A673 (cell line): ENCODE measurements at regions of chr3 and their contacts with region 1.

Region 1: GRCh38 chr3:48273594-48274211 is 32.8 kb downstream of the ZNF589 start:
- DNase-seq: peak; percentile 47
- H3K4me3 ChIP-seq: no peak overlapping the region
- H3K27ac ChIP-seq: no peak overlapping the region
- H3K4me1 ChIP-seq: no peaks in the 10 kb centered on the region
- H3K27me3 ChIP-seq: no peaks in the 10 kb centered on the region
- CTCF ChIP-seq: peak; percentile 60

Region 2: DNA sequence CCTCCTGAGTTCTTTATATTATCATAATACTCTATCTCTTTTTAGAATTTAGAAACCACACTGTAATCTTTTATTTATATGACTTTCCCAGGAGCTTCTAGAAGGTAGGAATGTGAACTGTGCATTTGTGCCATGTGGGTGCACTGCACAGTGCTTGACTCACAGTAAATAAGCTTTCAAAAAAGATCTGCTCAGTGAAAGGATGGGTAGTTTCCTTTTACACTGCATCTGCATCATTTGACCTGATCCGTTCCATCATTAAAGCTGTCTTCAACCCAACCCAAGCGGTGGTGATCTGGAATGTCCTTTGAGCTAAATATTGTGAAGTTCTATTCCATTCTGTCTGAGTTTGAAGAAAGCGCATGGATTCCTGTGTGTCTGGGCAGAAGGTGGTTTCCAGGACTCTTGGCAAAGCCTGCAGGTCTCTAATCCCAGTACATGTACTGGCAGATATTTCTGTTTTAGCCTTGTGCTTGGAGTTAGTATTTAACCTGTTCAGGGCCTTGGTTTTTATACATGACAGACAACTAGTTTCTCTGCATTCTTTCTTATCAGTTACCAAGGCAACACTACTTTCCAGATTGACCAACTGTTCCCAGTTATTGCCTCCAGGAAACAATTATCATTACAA is 374.1 kb before region 1 on chr3:
- CTCF ChIA-PET with region 1: no interaction called
- POLR2A ChIA-PET with region 1: no interaction called
- intact Hi-C with region 1: no loop called
- DNase-seq: no peak
- H3K4me3 ChIP-seq: no peak overlapping the region
- H3K27ac ChIP-seq: no peak overlapping the region
- H3K4me1 ChIP-seq: no peaks in the 10 kb centered on the region
- H3K27me3 ChIP-seq: no peaks in the 10 kb centered on the region
- CTCF ChIP-seq: no peak

Region 3: GRCh38 chr3:48285132-48285531 is 11.4 kb after region 1 on chr3:
- CTCF ChIA-PET with region 1: no interaction called
- POLR2A ChIA-PET with region 1: no interaction called
- intact Hi-C with region 1: no loop called
- DNase-seq: no peak
- H3K4me3 ChIP-seq: no peak overlapping the region
- H3K27ac ChIP-seq: no peak overlapping the region
- H3K4me1 ChIP-seq: no peaks in the 10 kb centered on the region
- H3K27me3 ChIP-seq: no peaks in the 10 kb centered on the region
- CTCF ChIP-seq: no peak

Region 4: GRCh38 chr3:48429960-48430707 is 156.4 kb after region 1 on chr3 and contains the start of gene PLXNB1:
- CTCF ChIA-PET with region 1: no interaction called
- POLR2A ChIA-PET with region 1: no interaction called
- intact Hi-C with region 1: loop called (anchors 5 kb)
- DNase-seq: peak; percentile 40
- H3K4me3 ChIP-seq: peak within 1 kb of the TSS; percentile 62
- H3K27ac ChIP-seq: peak within 1 kb of the TSS; percentile 77
- H3K4me1 ChIP-seq: peaks cover 7% of the 10 kb centered on the region
- H3K27me3 ChIP-seq: no peaks in the 10 kb centered on the region
- CTCF ChIP-seq: no peak
- total RNA-seq, gene PLXNB1: 24.6 and 38.0 TPM in 2 replicates